Natural killer cell (primary cell): ENCODE measurements at regions of chr1 and their contacts with region 1.

Region 1: DNA sequence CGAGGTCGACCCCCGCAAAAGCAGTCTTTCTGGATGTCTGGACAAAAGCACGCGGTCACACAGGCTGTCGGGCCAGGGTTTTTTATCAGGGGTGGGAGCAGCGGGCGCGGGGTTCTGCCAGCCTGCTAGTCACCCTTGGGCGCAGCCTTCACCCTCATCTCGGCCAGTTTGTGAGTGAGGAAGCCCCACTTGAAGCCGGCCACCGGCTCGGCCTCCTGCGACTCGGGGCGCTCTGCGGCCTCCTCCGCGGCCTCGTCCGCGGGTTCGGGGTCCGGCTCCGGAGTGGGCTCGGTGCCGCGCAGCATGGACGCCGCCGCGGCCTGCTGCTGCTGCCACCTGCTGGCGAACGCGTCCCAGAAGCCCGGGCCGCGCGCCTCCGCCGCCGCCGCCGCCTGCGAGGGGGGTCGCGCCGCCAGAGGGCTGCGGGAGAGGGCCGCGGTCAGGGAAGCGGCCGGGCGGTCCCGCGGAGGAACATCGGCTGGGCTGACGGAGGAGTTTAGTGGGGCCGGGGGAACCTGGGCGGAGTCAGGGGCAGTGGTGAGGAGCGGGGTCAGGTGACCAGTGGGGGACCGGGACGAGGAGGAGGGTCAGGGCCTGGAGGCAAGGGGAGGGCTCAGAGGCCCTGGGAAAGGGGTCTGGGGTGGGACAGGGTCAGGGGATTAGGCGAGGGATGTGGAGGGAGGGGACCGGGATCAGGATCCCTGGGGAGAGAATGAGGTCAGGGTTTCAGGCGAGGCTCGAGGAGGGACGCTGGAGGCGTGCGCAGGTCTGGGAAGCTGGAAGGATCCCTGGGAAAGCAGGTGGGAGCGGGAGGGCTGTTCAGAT is 4.5 kb downstream of the C1orf232 start:
- DNase-seq: peak; percentile 56 to 73
- ATAC-seq: peak; percentile 67 to 77 (median 73)
- H3K4me3 ChIP-seq: no peak overlapping the region
- H3K4me3 Mint-ChIP-seq: peak overlapping the region; percentile 64
- H3K27ac ChIP-seq: no peak overlapping the region
- H3K27ac Mint-ChIP-seq: no peak overlapping the region
- H3K4me1 ChIP-seq: peaks cover 27% of the 10 kb centered on the region
- H3K4me1 Mint-ChIP-seq: peaks cover 0 to 17% of the 10 kb centered on the region in 2 donors
- H3K27me3 ChIP-seq: peaks cover 19% of the 10 kb centered on the region
- H3K27me3 Mint-ChIP-seq: peaks cover 7 to 28% of the 10 kb centered on the region in 2 donors
- CTCF ChIP-seq: peak; percentile 76

Region 2: DNA sequence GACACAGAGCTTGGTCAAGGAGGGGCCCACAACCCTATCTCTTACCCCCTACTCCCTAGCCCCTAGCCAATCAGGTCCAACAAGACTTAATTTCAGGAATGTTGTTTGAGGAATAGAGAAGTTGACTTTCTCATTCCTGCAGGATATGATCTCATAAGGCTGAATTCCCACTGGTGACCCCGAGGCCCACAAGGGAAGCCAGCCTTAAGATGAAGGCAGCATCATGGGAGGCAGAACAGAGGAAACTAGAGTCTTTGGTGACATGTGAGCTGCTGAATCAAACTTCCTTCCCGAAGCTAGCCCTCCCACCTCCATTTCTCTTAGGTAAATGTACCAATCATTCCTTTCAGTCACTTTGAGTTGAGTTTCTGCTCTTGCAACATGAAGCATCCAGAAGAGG is 61.7 kb before region 1 on chr1:
- intact Hi-C with region 1: loop called (anchors 1 kb)
- DNase-seq: no peak
- ATAC-seq: no peak
- H3K4me3 ChIP-seq: no peak overlapping the region
- H3K4me3 Mint-ChIP-seq: no peak overlapping the region
- H3K27ac ChIP-seq: no peak overlapping the region
- H3K27ac Mint-ChIP-seq: no peak overlapping the region
- H3K4me1 ChIP-seq: no peaks in the 10 kb centered on the region
- H3K4me1 Mint-ChIP-seq: no peaks in the 10 kb centered on the region
- H3K27me3 ChIP-seq: no peaks in the 10 kb centered on the region
- H3K27me3 Mint-ChIP-seq: peaks cover 3 to 6% of the 10 kb centered on the region in 2 donors
- CTCF ChIP-seq: no peak